ENCODE measurements at regions of chr12 and their contacts with region 1.

Region 1: DNA sequence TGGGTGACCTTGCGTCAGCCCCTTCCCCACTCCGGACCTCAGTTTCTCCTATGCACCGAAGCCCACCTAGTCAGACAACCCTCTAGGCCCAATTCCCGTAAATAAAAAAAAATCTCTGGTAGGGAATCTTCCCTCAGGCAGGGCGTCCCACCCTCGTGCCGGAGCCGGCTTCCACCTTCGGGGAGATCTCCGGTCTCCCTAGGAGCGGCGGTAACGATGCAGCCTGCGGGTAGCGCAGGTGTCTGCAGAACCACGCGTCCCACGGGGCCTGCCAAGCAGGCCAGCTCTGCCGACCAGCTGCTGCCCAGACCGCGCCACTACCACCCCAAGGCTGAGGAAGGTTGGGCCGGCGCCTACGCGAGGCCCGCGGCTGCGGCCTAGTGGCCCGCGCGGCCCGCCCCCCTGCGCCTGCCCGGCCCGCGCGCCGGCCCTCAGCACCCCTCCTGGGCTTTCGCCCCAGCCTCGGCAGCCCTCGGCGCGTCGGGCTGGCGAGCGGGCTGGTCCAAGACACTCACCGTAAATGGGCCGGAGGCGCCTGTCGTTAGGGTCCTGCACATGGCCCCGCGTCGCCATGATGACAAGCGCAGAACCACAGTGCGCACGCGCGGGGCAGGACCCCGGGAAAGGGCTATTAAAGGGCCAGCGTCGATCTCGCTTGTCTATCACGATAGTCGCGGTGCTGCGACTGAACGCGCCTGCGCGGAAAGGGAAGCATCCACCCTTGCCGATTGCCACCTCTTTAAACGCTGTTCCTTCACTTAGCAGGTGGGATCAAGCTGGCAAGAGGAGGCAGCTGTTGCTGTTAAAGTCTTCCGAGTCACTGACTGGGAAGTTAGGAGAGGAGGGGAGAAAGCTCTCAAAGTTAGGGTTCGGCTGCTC is at the start of gene NAA25:
- DNase-seq: peak; percentile 69 to 76 (median 76)
- H3K4me3 ChIP-seq: peak within 1 kb of the TSS; percentile 72 to 96 (median 87)
- H3K4me3 Mint-ChIP-seq: peak within 1 kb of the TSS; percentile 95 to 97
- H3K27ac ChIP-seq: peak within 1 kb of the TSS; percentile 56 to 91
- H3K27ac Mint-ChIP-seq: peak within 1 kb of the TSS; percentile 92 to 97 (median 93)
- H3K4me1 ChIP-seq: peaks cover 27 to 31% of the 10 kb centered on the region in 2 donors
- H3K4me1 Mint-ChIP-seq: peaks cover 37% of the 10 kb centered on the region
- H3K27me3 ChIP-seq: no peaks in the 10 kb centered on the region
- H3K27me3 Mint-ChIP-seq: peaks cover 0 to 1% (median 0%) of the 10 kb centered on the region in 3 donors
- CTCF ChIP-seq: no peak
- polyA plus RNA-seq, gene NAA25: 4.3 to 7.9 (median 7.3) TPM

Region 2: DNA sequence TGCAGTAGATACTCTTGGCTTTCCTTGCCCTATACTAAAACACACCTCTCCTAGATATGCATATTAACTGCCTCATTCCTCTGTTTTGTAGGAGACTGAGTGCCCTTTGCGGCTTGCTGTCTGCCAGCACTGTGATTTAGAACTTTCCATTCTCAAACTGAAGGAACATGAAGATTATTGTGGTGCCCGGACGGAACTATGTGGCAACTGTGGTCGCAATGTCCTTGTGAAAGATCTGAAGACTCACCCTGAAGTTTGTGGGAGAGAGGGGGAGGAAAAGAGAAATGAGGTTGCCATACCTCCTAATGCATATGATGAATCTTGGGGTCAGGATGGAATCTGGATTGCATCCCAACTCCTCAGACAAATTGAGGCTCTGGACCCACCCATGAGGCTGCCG is 32.3 kb after region 1 on chr12:
- intact Hi-C with region 1: loop called in 1 of 2 experiments (anchors 5 kb)
- DNase-seq: peak; percentile 59 to 67 (median 62)
- H3K4me3 ChIP-seq: peak overlapping the region in 1 of 3 experiments; percentile 54
- H3K4me3 Mint-ChIP-seq: peak overlapping the region in 1 of 2 donors; percentile 72
- H3K27ac ChIP-seq: peak overlapping the region; percentile 47 to 82
- H3K27ac Mint-ChIP-seq: peak overlapping the region; percentile 75 to 96 (median 93)
- H3K4me1 ChIP-seq: peaks cover 42 to 48% of the 10 kb centered on the region in 2 donors
- H3K4me1 Mint-ChIP-seq: peaks cover 37% of the 10 kb centered on the region
- H3K27me3 ChIP-seq: no peaks in the 10 kb centered on the region
- H3K27me3 Mint-ChIP-seq: no peaks in the 10 kb centered on the region
- CTCF ChIP-seq: no peak

Region 3: GRCh38 chr12:112198120-112198733 is 89.8 kb after region 1 on chr12:
- intact Hi-C with region 1: no loop called
- DNase-seq: peak in 2 of 3 donors; percentile 3
- H3K4me3 ChIP-seq: no peak overlapping the region
- H3K4me3 Mint-ChIP-seq: no peak overlapping the region
- H3K27ac ChIP-seq: peak overlapping the region in 1 of 2 donors; percentile 8
- H3K27ac Mint-ChIP-seq: no peak overlapping the region
- H3K4me1 ChIP-seq: no peaks in the 10 kb centered on the region
- H3K4me1 Mint-ChIP-seq: no peaks in the 10 kb centered on the region
- H3K27me3 ChIP-seq: no peaks in the 10 kb centered on the region
- H3K27me3 Mint-ChIP-seq: no peaks in the 10 kb centered on the region
- CTCF ChIP-seq: peak; percentile 51

Region 4: DNA sequence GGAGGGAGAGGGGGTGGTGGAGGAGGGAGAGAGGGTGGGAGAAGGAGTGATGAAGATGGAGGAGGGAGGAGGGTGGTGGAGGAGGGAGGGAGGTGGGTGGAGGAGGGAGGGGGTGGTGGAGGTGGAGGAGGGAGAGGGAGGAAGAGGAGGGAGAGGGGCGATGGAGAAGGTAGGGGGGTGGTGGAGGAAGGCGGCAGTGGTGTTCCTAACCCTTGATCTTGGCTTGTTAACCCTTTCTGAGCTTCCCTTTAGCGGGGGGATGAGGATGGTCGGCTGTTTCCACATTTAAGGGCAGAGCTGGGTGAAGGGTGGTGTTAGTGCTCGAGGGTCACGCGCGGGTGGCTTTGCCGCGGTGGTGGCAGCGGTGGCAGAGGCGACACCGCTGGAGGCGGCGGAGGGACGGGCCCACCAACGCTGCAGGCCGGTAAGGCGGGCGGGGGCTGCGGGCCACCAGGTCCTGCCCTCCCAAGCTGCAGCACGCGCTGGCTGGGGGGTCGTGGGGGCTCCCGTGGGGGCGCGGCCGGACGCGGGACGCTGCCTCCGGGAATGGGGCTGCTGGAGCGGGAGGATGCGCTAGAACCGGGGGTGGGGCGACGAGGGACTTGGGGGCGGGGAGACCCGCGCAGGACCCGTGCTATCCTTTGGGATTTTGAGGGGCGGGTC is 466.6 kb after region 1 on chr12:
- intact Hi-C with region 1: no loop called
- DNase-seq: no peak
- H3K4me3 ChIP-seq: no peak overlapping the region
- H3K4me3 Mint-ChIP-seq: peak overlapping the region in 1 of 2 donors; percentile 74
- H3K27ac ChIP-seq: no peak overlapping the region
- H3K27ac Mint-ChIP-seq: no peak overlapping the region
- H3K4me1 ChIP-seq: no peaks in the 10 kb centered on the region
- H3K4me1 Mint-ChIP-seq: no peaks in the 10 kb centered on the region
- H3K27me3 ChIP-seq: peaks cover 12 to 34% of the 10 kb centered on the region in 2 donors
- H3K27me3 Mint-ChIP-seq: peaks cover 39 to 69% (median 49%) of the 10 kb centered on the region in 3 donors
- CTCF ChIP-seq: no peak